CD4-positive, alpha-beta memory T cell (primary cell): ENCODE measurements at regions of chr7 and their contacts with region 1.

Region 1: GRCh38 chr7:150514748-150515222 is at the start of gene GIMAP7:
- DNase-seq: peak; percentile 77 to 84 (median 79)
- H3K4me3 ChIP-seq: peak within 1 kb of the TSS; percentile 92 to 99
- H3K4me3 Mint-ChIP-seq: peak within 1 kb of the TSS; percentile 97 to 100 (median 100)
- H3K27ac ChIP-seq: peak within 1 kb of the TSS; percentile 77
- H3K27ac Mint-ChIP-seq: peak within 1 kb of the TSS; percentile 94 to 99 (median 97)
- H3K4me1 ChIP-seq: peaks cover 47% of the 10 kb centered on the region
- H3K4me1 Mint-ChIP-seq: peaks cover 36 to 54% (median 42%) of the 10 kb centered on the region in 4 donors
- H3K27me3 ChIP-seq: no peaks in the 10 kb centered on the region
- H3K27me3 Mint-ChIP-seq: no peaks in the 10 kb centered on the region
- total RNA-seq, gene GIMAP7: 464 to 476 TPM

Region 2: DNA sequence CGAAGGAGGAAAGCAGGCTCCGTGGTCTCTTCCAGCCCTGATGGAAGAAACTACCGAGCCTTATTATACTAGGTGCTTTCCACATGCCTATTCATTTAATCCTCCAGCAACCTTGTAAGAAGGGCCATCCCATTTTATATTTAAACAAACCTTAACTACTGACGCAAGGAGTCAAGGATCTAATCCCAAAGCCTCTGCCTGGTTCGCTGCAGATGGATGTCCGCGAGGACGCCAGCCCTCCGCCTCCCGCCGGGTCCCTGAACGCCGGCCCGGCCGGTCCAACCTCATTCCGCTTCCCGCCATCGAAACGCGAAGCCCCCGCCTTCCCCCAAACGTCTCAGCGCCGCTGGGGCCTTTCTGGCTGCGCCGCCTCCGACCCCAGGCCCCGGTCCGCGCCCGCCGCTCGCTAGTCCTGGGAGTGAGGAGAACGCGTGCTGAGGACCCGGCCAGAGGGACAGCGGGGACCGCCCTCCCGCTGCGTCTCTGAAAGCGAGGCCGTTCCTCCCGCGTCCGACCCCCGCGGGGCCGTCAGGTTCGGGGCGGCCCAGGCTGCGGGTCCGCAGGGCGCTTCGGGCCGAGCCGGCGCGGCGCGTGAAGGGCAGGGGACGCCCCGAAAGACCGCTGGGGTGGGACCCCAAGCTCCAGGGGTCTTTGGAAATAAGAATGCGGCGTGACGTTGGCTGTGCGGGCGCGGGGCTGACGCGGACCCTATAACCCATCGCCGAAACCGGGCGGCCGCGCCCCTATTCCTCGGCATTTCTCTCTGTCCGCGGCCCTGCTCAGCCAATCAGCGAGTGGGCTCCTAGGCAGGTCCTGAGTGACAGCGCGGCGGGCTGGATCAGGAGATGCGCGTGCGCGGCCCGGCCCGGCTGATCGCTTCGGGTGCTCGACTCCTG is 641.5 kb before region 1 on chr7 and contains the start of gene ATP6V0E2:
- CTCF ChIA-PET with region 1: no interaction called
- POLR2A ChIA-PET with region 1: no interaction called
- intact Hi-C with region 1: no loop called
- DNase-seq: peak; percentile 88 to 91 (median 90)
- H3K4me3 ChIP-seq: peak within 1 kb of the TSS; percentile 61 to 82
- H3K4me3 Mint-ChIP-seq: peak within 1 kb of the TSS; percentile 85 to 93 (median 90)
- H3K27ac ChIP-seq: peak within 1 kb of the TSS; percentile 78
- H3K27ac Mint-ChIP-seq: peak within 1 kb of the TSS; percentile 89 to 93 (median 92)
- H3K4me1 ChIP-seq: peaks cover 83% of the 10 kb centered on the region
- H3K4me1 Mint-ChIP-seq: peaks cover 63 to 76% (median 66%) of the 10 kb centered on the region in 4 donors
- H3K27me3 ChIP-seq: no peaks in the 10 kb centered on the region
- H3K27me3 Mint-ChIP-seq: no peaks in the 10 kb centered on the region
- total RNA-seq, gene ATP6V0E2: 64.6 to 65.3 TPM

Region 3: DNA sequence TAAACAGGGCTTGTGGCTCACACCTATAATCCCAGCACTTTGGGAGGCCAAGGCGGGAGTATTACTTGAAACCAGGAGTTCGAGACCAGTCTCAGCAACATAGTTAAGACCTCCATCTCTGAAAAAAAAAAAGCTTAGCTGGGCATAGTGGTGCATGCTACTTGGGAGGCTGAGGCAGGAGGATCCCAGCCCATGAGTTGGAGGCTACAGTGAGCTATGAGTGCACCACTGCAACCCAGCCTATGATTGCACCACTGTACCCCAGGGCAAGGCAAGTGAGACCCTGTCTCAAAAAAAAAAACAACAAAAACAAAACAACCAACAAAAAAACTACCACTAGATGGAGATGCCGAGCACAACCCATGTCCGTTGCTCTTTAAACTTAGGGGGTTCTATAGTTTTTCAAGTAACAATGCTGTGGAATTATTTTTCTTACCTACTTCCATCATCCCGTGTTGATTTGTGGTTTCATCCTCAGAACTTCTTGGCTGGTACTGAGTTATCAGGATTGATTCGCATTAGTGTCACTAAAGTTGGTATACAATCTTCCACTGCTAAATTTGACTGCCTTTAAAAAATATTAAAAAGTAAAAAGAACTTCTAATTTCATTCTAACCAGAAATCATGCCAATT is 158.4 kb before region 1 on chr7:
- CTCF ChIA-PET with region 1: no interaction called
- POLR2A ChIA-PET with region 1: no interaction called
- intact Hi-C with region 1: loop called (anchors 5 kb)
- DNase-seq: peak in 4 of 5 donors; percentile 41 to 55 (median 53)
- H3K4me3 ChIP-seq: no peak overlapping the region
- H3K4me3 Mint-ChIP-seq: peak overlapping the region in 3 of 8 donors; percentile 8 to 69 (median 26)
- H3K27ac ChIP-seq: peak overlapping the region; percentile 6
- H3K27ac Mint-ChIP-seq: peak overlapping the region in 6 of 7 donors; percentile 13 to 60 (median 44)
- H3K4me1 ChIP-seq: peaks cover 27% of the 10 kb centered on the region
- H3K4me1 Mint-ChIP-seq: peaks cover 18 to 44% (median 32%) of the 10 kb centered on the region in 4 donors
- H3K27me3 ChIP-seq: no peaks in the 10 kb centered on the region
- H3K27me3 Mint-ChIP-seq: no peaks in the 10 kb centered on the region

Region 4: DNA sequence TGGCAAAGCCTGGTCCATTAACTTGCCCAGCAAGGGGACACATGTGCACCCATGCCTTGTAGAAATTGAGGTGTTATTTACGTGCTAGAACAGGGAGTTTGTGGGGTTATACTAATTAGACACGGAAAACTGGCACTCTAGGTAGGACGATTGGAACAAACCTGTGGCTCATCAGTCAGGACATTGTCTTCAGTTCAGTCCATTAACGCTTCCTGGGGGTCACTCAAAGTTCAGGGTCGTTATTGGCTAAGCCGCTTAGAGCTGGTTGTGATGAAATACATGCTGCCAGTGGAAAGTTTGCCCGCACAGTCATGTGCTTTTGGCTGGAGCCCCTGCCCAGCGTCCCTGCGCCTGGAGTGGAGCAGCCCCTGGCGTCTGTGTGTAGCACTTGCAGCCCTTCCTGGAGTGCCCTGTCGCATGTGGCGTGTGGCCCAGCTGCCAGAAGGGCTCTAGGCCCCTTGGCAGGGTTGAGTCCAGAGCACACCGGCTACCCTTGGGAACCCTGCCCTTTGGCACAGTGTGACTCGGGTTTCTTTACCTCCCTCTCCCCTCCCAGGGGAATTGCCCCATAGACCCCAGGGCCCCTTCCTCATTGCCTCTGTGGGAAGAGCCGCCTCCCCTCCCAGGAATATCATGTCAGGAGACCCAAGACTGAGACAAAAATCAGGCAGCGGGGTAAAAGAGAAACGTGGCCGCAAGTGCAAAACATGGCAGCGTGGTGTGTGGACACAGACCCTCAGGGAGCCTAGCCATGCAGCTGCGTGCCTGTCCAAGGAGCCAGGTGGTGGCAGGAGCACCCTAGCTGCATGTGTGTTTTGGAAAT is 125.9 kb before region 1 on chr7:
- CTCF ChIA-PET with region 1: no interaction called
- POLR2A ChIA-PET with region 1: no interaction called
- intact Hi-C with region 1: no loop called
- DNase-seq: no peak
- H3K4me3 ChIP-seq: no peak overlapping the region
- H3K4me3 Mint-ChIP-seq: no peak overlapping the region
- H3K27ac ChIP-seq: no peak overlapping the region
- H3K27ac Mint-ChIP-seq: no peak overlapping the region
- H3K4me1 ChIP-seq: no peaks in the 10 kb centered on the region
- H3K4me1 Mint-ChIP-seq: peaks cover 0 to 2% (median 0%) of the 10 kb centered on the region in 4 donors
- H3K27me3 ChIP-seq: no peaks in the 10 kb centered on the region
- H3K27me3 Mint-ChIP-seq: no peaks in the 10 kb centered on the region

Region 5: GRCh38 chr7:150481186-150481920 is 33.4 kb before region 1 on chr7:
- CTCF ChIA-PET with region 1: interaction called, 11 read pairs
- POLR2A ChIA-PET with region 1: interaction called, 673 read pairs
- intact Hi-C with region 1: loop called (anchors 1 kb)
- DNase-seq: peak; percentile 63 to 87 (median 69)
- H3K4me3 ChIP-seq: peak overlapping the region in 1 of 2 donors; percentile 37
- H3K4me3 Mint-ChIP-seq: peak overlapping the region; percentile 80 to 90 (median 88)
- H3K27ac ChIP-seq: peak overlapping the region; percentile 71
- H3K27ac Mint-ChIP-seq: peak overlapping the region; percentile 96 to 100 (median 99)
- H3K4me1 ChIP-seq: peaks cover 99% of the 10 kb centered on the region
- H3K4me1 Mint-ChIP-seq: peaks cover 75 to 98% (median 91%) of the 10 kb centered on the region in 4 donors
- H3K27me3 ChIP-seq: no peaks in the 10 kb centered on the region
- H3K27me3 Mint-ChIP-seq: no peaks in the 10 kb centered on the region

Region 6: DNA sequence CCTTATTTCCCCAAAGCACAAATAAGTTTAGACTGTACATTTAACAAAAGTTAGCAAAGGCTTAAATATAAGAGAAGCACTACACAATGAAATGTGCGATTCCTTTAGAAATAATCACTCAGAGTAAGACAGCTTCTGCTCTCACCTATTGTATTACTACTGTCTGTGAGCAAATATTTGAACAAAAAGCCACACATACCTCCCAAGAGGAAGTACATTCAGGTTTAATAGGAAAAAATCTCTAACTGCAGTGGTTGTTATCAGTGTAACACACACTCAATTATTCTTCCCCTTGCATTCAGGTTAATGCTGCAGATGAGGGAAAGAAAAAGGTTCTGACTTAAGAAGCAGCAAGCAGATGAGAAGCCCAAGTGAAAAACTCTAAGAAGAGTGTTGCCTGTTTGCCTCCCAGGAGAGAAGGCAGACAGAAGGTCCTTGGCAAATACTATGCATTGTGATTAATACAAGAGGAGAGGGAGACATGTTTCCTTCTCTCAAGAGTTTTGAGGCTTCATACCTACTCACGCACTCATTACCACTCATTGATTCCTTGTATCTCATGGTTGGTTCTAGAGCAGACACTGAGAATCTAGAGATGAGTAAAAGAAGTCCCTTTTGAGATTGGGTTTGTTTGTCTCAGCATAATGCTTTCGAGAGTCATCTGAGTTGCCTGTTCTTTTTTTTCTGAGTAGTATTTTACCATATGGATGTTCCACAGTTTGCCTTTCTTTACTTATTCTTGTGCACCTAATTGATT is 66.0 kb after region 1 on chr7:
- CTCF ChIA-PET with region 1: no interaction called
- POLR2A ChIA-PET with region 1: interaction called, 16 read pairs
- intact Hi-C with region 1: no loop called
- DNase-seq: no peak
- H3K4me3 ChIP-seq: no peak overlapping the region
- H3K4me3 Mint-ChIP-seq: peak overlapping the region in 3 of 8 donors; percentile 26 to 33 (median 33)
- H3K27ac ChIP-seq: no peak overlapping the region
- H3K27ac Mint-ChIP-seq: peak overlapping the region; percentile 47 to 85 (median 68)
- H3K4me1 ChIP-seq: peaks cover 14% of the 10 kb centered on the region
- H3K4me1 Mint-ChIP-seq: peaks cover 22 to 81% (median 36%) of the 10 kb centered on the region in 4 donors
- H3K27me3 ChIP-seq: no peaks in the 10 kb centered on the region
- H3K27me3 Mint-ChIP-seq: no peaks in the 10 kb centered on the region

Region 7: GRCh38 chr7:150675714-150676113 is 160.9 kb after region 1 on chr7:
- CTCF ChIA-PET with region 1: no interaction called
- POLR2A ChIA-PET with region 1: interaction called, 4 read pairs
- intact Hi-C with region 1: loop called (anchors 5 kb)
- DNase-seq: no peak
- H3K4me3 ChIP-seq: no peak overlapping the region
- H3K4me3 Mint-ChIP-seq: peak overlapping the region; percentile 39 to 89 (median 61)
- H3K27ac ChIP-seq: peak overlapping the region; percentile 18
- H3K27ac Mint-ChIP-seq: peak overlapping the region; percentile 26 to 92 (median 86)
- H3K4me1 ChIP-seq: peaks cover 75% of the 10 kb centered on the region
- H3K4me1 Mint-ChIP-seq: peaks cover 55 to 87% (median 70%) of the 10 kb centered on the region in 4 donors
- H3K27me3 ChIP-seq: no peaks in the 10 kb centered on the region
- H3K27me3 Mint-ChIP-seq: no peaks in the 10 kb centered on the region

Region 8: GRCh38 chr7:150737265-150738055 is 222.7 kb after region 1 on chr7 and contains the start of gene GIMAP5:
- CTCF ChIA-PET with region 1: interaction called, 10 read pairs
- POLR2A ChIA-PET with region 1: interaction called, 187 read pairs
- intact Hi-C with region 1: loop called (anchors 5 kb)
- DNase-seq: peak in 4 of 5 donors; percentile 58 to 74 (median 61)
- H3K4me3 ChIP-seq: peak within 1 kb of the TSS; percentile 81 to 82
- H3K4me3 Mint-ChIP-seq: peak within 1 kb of the TSS; percentile 92 to 100 (median 98)
- H3K27ac ChIP-seq: peak within 1 kb of the TSS; percentile 83
- H3K27ac Mint-ChIP-seq: peak within 1 kb of the TSS; percentile 86 to 98 (median 96)
- H3K4me1 ChIP-seq: peaks cover 64% of the 10 kb centered on the region
- H3K4me1 Mint-ChIP-seq: peaks cover 55 to 94% (median 64%) of the 10 kb centered on the region in 4 donors
- H3K27me3 ChIP-seq: no peaks in the 10 kb centered on the region
- H3K27me3 Mint-ChIP-seq: no peaks in the 10 kb centered on the region
- total RNA-seq, gene GIMAP5: 296 to 297 TPM